ENCODE measurements at regions of chr7 and their contacts with region 1.

Region 1: DNA sequence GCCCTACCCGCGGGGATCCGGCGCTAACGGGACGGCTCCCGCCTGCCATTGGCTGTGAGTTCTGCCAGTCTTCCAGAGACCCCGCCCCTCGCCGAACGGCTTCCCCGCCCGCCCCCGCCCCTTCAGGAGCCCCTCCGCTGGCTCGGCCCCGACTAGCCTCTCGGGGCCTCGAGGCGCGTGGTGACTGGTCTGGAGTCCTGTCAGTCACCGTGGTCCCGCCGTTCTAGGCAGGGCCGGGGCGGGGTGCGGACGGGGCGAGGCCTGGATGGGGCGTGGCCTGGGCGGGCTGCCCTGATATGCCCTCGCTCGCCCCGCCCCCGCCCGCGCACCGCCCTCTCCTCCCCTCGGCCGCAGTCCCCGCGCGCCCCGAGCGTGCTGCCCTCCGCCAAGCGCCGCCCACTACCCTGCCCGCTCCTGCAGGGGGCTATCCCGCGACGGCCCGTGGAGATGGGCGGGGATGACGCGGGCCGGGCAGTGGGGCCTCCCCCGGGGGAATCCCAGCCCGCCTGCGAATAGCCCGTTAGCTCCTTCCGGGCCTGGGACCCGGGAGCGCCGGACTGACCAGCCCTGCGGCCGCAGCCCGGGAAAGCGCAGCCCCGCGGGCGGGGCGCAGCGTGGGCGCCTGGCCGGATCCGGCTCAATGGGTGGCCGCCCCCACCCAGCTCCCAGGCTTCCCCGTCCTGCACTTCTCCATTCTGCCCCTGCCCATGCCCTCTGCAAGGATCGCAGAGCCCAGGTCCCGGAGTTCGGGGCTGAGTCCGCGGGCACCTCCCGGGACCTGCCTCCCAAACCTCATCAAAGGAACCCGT is 450 bp upstream of the HIP1 start:
- DNase-seq: peak; percentile 99
- H3K4me3 Mint-ChIP-seq: peak overlapping the region; percentile 90
- H3K27ac Mint-ChIP-seq: peak overlapping the region; percentile 85
- H3K4me1 Mint-ChIP-seq: peaks cover 17% of the 10 kb centered on the region
- H3K27me3 Mint-ChIP-seq: peaks cover 4% of the 10 kb centered on the region

Region 2: GRCh38 chr7:75531359-75531821 is 207.8 kb before region 1 on chr7:
- CTCF ChIA-PET with region 1: no interaction called
- POLR2A ChIA-PET with region 1: no interaction called
- intact Hi-C with region 1: loop called (anchors 1 kb)
- DNase-seq: no peak
- H3K4me3 Mint-ChIP-seq: no peak overlapping the region
- H3K27ac Mint-ChIP-seq: no peak overlapping the region
- H3K4me1 Mint-ChIP-seq: peaks cover 18% of the 10 kb centered on the region
- H3K27me3 Mint-ChIP-seq: no peaks in the 10 kb centered on the region

Region 3: DNA sequence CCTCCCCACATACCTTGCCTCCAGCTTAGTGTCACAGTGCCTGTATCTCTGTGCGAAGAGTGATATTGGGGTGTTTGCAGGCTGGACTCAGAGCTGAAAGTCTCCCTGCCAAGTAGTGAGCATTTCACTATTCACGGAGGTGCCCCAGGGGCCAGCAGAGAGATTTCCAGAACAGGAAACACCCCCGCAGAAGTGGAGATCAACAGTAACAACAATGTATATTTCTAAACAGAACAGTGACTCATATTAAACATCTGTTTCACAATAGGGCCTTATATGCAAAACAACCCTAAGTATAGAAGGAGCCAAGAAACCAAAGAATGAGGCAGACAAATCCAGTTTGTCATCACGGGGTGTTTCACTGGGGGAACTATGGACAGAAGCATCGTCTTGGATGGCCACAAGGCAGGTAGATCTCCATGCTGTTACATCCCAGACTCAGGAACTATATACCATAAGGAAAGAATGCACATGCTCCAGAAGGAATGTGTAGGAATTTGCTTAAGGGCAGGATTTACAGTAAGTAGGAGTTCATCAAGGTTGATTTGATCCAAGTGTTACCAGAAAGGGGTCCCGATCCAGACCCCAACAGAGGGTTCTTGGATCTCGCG is 103.8 kb after region 1 on chr7:
- CTCF ChIA-PET with region 1: no interaction called
- POLR2A ChIA-PET with region 1: no interaction called
- intact Hi-C with region 1: loop called (anchors 1 kb)
- DNase-seq: peak; percentile 80
- H3K4me3 Mint-ChIP-seq: peak overlapping the region; percentile 41
- H3K27ac Mint-ChIP-seq: peak overlapping the region; percentile 81
- H3K4me1 Mint-ChIP-seq: peaks cover 15% of the 10 kb centered on the region
- H3K27me3 Mint-ChIP-seq: no peaks in the 10 kb centered on the region

Region 4: GRCh38 chr7:75878769-75879611 is 139.8 kb after region 1 on chr7 and contains the start of gene RHBDD2:
- CTCF ChIA-PET with region 1: no interaction called
- POLR2A ChIA-PET with region 1: no interaction called
- intact Hi-C with region 1: loop called (anchors 2 kb)
- DNase-seq: peak; percentile 98
- H3K4me3 Mint-ChIP-seq: peak within 1 kb of the TSS; percentile 96
- H3K27ac Mint-ChIP-seq: peak within 1 kb of the TSS; percentile 90
- H3K4me1 Mint-ChIP-seq: peaks cover 29% of the 10 kb centered on the region
- H3K27me3 Mint-ChIP-seq: no peaks in the 10 kb centered on the region
- total RNA-seq, gene RHBDD2: 30.1 to 31.9 TPM

Region 5: GRCh38 chr7:75971961-75972763 is 233.0 kb after region 1 on chr7:
- CTCF ChIA-PET with region 1: no interaction called
- POLR2A ChIA-PET with region 1: no interaction called
- intact Hi-C with region 1: no loop called
- DNase-seq: no peak
- H3K4me3 Mint-ChIP-seq: no peak overlapping the region
- H3K27ac Mint-ChIP-seq: no peak overlapping the region
- H3K4me1 Mint-ChIP-seq: no peaks in the 10 kb centered on the region
- H3K27me3 Mint-ChIP-seq: no peaks in the 10 kb centered on the region

Region 6: GRCh38 chr7:76020031-76020714 is 281.0 kb after region 1 on chr7:
- CTCF ChIA-PET with region 1: no interaction called
- POLR2A ChIA-PET with region 1: no interaction called
- intact Hi-C with region 1: no loop called
- DNase-seq: peak; percentile 81
- H3K4me3 Mint-ChIP-seq: no peak overlapping the region
- H3K27ac Mint-ChIP-seq: no peak overlapping the region
- H3K4me1 Mint-ChIP-seq: peaks cover 11% of the 10 kb centered on the region
- H3K27me3 Mint-ChIP-seq: no peaks in the 10 kb centered on the region

Measured in activated CD4-positive, alpha-beta memory T cell treated with anti-CD3 and anti-CD28 coated beads for 36 hours (primary cell).